OCI-LY7 (cell line): ENCODE measurements at regions of chr1 and their contacts with region 1.

Region 1: DNA sequence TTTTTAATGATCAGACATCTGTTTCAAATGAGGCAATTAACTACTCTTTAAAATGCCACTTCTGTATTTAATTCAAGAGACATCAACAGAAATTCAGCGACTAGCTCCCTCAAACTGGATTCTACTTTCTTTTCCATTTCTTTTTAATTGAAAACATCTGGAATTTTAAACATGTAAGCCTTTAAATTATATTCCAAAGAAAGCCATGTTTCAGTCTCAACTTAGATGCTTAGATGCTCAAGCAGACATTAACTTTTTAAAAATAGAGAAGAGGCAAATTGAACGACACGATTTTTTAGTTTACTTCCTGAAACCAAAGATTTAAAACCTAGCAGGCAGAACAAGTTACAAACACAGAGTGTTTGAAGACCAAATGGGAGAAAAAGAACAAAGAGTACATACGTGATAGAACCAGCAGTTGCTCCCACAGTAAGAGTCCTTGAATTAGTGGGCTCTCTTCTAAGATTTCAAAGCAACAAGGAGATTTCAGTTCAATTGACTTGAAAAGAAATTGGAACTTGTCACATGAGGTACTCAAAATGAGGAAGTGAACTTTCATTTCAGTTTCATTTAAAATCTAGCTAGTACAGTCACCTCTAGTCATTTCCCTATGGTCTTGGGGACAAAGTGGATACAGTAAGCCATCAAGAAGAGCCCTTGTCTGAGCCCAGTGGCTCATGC is at the start of gene CTSS:
- DNase-seq: peak; percentile 88
- H3K4me3 ChIP-seq: peak within 1 kb of the TSS; percentile 87
- H3K27ac ChIP-seq: peak within 1 kb of the TSS; percentile 80
- H3K4me1 ChIP-seq: peaks cover 46% of the 10 kb centered on the region
- CTCF ChIP-seq: no peak
- total RNA-seq, gene CTSS: 38.7 and 47.4 TPM in 2 replicates

Region 2: DNA sequence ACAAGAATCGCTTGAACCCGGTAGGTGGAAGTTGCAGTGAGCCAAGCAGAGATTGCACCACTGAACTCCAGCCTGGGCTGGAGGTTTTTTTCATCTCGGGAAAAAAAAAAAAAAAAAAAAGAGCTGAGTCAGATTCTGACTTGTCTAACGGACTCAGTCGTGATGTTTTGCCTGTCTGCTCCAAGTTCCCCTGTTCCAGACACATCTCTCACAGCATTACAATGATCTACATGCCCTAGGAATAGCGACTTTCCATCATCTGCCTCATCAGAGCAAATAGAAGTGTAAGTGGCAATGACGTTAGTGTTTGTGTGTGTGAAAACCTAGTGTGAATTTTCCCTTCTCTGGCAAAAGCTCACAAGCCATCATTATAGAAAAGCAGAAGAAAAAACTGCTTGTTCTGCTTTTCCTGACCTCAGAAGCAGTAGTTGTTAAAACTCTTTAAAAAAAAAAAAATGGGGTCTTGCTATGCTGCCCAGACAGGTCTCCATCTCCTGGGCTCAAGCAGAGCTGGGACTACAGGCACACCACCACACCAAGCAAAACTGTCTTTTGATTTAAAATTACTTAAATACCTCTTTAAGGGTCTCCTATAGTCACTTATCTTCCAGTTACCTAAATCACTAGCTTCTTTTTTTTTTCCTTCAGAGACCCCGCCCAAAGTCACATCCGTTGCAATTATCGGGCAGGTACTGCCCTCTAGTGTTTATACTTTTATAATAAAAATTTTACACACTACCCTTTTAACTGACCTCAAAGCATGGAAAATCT is 578.5 kb before region 1 on chr1:
- CTCF ChIA-PET with region 1: no interaction called
- POLR2A ChIA-PET with region 1: no interaction called
- intact Hi-C with region 1: no loop called
- DNase-seq: peak; percentile 80
- H3K4me3 ChIP-seq: no peak overlapping the region
- H3K27ac ChIP-seq: no peak overlapping the region
- H3K4me1 ChIP-seq: peaks cover 11% of the 10 kb centered on the region
- CTCF ChIP-seq: peak; percentile 89

Region 3: DNA sequence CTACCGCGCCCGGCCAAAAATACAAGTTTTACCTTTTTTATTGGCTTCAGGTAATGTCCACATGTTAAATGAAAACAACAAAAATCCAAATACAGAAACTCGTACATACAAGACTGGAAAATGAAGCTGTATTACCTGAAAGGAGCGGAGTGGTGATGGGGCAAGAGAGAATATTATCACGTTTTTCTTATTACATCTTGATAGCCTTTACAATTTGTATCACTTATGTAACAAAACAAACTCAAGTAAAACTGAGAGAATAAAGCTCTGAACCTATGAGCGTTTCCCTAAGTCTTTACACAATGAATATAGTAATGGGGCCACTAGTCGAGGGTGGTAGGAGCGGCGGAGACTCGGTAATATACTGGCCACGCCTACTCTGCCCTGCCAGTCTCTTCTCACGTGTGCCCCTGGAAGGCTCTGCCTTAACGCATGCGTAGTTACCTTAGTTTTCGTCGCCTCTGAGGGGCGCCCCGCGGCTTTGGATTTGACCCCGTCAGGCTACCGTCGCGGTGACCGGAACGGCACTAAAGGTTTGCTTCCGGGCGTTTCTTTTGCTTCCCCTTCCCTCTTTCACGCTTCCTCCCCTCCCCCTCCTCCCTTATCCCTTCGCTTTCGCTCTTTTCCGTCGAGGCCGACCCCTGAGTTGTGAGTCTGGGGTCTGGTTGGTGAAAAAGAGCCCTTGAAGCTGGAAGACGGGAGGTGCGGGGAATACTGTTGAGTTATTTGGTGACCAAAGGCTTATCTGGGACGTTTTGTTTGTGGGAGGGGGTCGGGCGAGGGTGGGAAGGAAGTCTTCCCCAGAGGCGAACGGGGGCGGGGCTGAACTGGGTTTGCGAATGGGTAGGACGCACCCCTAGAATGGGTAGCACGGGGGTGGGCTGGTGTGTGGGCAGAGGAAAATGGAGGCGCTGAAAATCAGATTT is 160.6 kb after region 1 on chr1 and contains the start of gene SETDB1:
- CTCF ChIA-PET with region 1: no interaction called
- POLR2A ChIA-PET with region 1: interaction called, 3 read pairs
- intact Hi-C with region 1: loop called (anchors 1 kb)
- DNase-seq: peak; percentile 99
- H3K4me3 ChIP-seq: peak within 1 kb of the TSS; percentile 75
- H3K27ac ChIP-seq: peak within 1 kb of the TSS; percentile 64
- H3K4me1 ChIP-seq: peaks cover 37% of the 10 kb centered on the region
- CTCF ChIP-seq: 0 out of 2 replicates have a peak, but pooled peaks have one; percentile 35
- total RNA-seq, gene SETDB1: 42.3 and 66.8 TPM in 2 replicates

Region 4: DNA sequence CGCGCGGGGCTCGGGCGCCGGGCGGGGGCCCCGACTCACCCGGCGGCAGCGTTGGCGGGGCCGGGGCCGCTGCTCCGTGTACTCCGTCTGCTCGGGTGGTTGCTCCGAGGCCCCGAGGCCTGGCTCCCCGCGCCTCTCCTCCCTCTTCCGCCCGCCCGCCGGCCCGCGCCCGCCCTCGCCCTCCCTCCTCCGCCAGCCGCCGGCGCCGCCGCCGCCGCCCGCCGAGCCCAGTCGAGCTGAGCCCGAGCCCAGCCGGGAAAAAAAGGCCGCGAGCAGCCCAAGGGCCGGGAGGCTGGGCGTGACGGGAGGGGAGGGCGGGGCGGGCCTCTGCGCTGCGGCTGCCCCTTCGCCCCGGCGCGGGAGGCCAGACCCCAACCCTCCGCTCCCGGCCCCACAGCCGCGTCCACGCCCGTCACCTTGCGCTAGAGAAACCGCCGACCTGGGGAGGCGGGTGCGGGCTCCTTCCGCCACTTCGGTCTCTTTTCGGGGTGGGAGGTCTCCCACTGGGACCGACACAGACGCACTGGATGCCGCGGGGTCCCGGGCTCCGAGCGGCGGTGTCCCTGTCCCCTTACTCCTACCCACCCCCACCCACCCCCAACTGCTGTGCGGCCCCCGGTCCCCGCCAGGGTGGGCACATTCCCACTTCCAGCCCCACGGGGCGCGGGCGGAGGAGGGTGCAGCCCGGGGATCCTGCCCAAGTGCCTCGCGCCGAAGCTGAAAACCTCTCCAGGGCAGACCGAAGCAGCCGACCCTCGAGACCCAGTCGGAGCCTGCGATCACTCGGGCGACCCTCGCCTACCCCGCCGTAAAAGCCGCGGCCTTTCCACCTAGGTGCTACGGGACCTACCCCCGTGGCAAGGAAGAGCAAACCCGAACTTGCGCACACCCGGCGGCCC is 209.4 kb after region 1 on chr1 and contains the start of gene CERS2:
- CTCF ChIA-PET with region 1: no interaction called
- POLR2A ChIA-PET with region 1: no interaction called
- intact Hi-C with region 1: no loop called
- DNase-seq: peak; percentile 74
- H3K4me3 ChIP-seq: peak within 1 kb of the TSS; percentile 80
- H3K27ac ChIP-seq: peak within 1 kb of the TSS; percentile 72
- H3K4me1 ChIP-seq: peaks cover 44% of the 10 kb centered on the region
- CTCF ChIP-seq: no peak
- total RNA-seq, gene CERS2: 50.9 and 64.7 TPM in 2 replicates